ENCODE measurements at regions of chr17 and their contacts with region 1.

Region 1: GRCh38 chr17:46212634-46213435 is 19.6 kb upstream of the KANSL1 start:
- DNase-seq: peak; percentile 79
- ATAC-seq: peak; percentile 51
- H3K4me3 ChIP-seq: no peak overlapping the region
- H3K4me3 Mint-ChIP-seq: no peak overlapping the region
- H3K27ac ChIP-seq: no peak overlapping the region
- H3K27ac Mint-ChIP-seq: no peak overlapping the region
- H3K4me1 ChIP-seq: no peaks in the 10 kb centered on the region
- H3K4me1 Mint-ChIP-seq: peaks cover 5% of the 10 kb centered on the region
- H3K27me3 ChIP-seq: no peaks in the 10 kb centered on the region
- H3K27me3 Mint-ChIP-seq: no peaks in the 10 kb centered on the region
- CTCF ChIP-seq: peak; percentile 91

Region 2: DNA sequence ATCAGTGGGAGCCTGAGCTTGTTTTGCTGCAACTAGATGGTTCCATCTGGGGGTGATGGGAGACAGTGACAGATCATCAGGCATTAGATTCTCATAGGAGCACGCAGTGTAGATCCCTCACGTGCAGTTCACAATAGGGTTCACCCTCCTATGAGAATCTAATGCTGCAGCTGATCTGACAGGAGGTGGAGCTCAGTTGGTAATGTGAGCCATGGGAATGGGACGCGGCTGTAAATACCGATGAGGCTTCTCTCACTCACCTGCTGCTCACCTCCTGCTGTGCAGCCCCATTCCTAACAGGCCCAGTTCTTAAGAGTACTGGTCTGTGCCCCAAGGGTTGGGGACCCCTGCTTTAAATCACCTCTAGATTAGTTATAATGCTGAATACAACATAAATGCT is 584.8 kb before region 1 on chr17:
- CTCF ChIA-PET with region 1: no interaction called
- POLR2A ChIA-PET with region 1: no interaction called
- intact Hi-C with region 1: loop called (anchors 10 kb)
- DNase-seq: no peak
- ATAC-seq: no peak
- H3K4me3 ChIP-seq: no peak overlapping the region
- H3K4me3 Mint-ChIP-seq: no peak overlapping the region
- H3K27ac ChIP-seq: no peak overlapping the region
- H3K27ac Mint-ChIP-seq: no peak overlapping the region
- H3K4me1 ChIP-seq: no peaks in the 10 kb centered on the region
- H3K4me1 Mint-ChIP-seq: no peaks in the 10 kb centered on the region
- H3K27me3 ChIP-seq: no peaks in the 10 kb centered on the region
- H3K27me3 Mint-ChIP-seq: no peaks in the 10 kb centered on the region
- CTCF ChIP-seq: no peak

Region 3: GRCh38 chr17:45784743-45785479 is 427.9 kb before region 1 on chr17:
- CTCF ChIA-PET with region 1: no interaction called
- POLR2A ChIA-PET with region 1: no interaction called
- intact Hi-C with region 1: no loop called
- DNase-seq: peak; percentile 64
- ATAC-seq: peak; percentile 43
- H3K4me3 ChIP-seq: peak overlapping the region in 4 of 5 experiments; percentile 40 to 69 (median 54)
- H3K4me3 Mint-ChIP-seq: peak overlapping the region; percentile 82
- H3K27ac ChIP-seq: no peak overlapping the region
- H3K27ac Mint-ChIP-seq: no peak overlapping the region
- H3K4me1 ChIP-seq: peaks cover 20 to 22% of the 10 kb centered on the region in 2 donors
- H3K4me1 Mint-ChIP-seq: peaks cover 15% of the 10 kb centered on the region
- H3K27me3 ChIP-seq: peaks cover 0 to 70% (median 42%) of the 10 kb centered on the region in 4 experiments
- H3K27me3 Mint-ChIP-seq: peaks cover 71% of the 10 kb centered on the region
- CTCF ChIP-seq: no peak

Region 4: GRCh38 chr17:45867702-45868101 is 345.1 kb before region 1 on chr17:
- CTCF ChIA-PET with region 1: no interaction called
- POLR2A ChIA-PET with region 1: no interaction called
- intact Hi-C with region 1: no loop called
- DNase-seq: no peak
- ATAC-seq: no peak
- H3K4me3 ChIP-seq: no peak overlapping the region
- H3K4me3 Mint-ChIP-seq: no peak overlapping the region
- H3K27ac ChIP-seq: no peak overlapping the region
- H3K27ac Mint-ChIP-seq: no peak overlapping the region
- H3K4me1 ChIP-seq: no peaks in the 10 kb centered on the region
- H3K4me1 Mint-ChIP-seq: no peaks in the 10 kb centered on the region
- H3K27me3 ChIP-seq: peaks cover 0 to 11% (median 7%) of the 10 kb centered on the region in 4 experiments
- H3K27me3 Mint-ChIP-seq: peaks cover 53% of the 10 kb centered on the region
- CTCF ChIP-seq: no peak

Region 5: GRCh38 chr17:46002311-46002972 is 210.4 kb before region 1 on chr17:
- CTCF ChIA-PET with region 1: interaction called, 122 read pairs
- POLR2A ChIA-PET with region 1: no interaction called
- intact Hi-C with region 1: no loop called
- DNase-seq: peak; percentile 84
- ATAC-seq: peak; percentile 97
- H3K4me3 ChIP-seq: no peak overlapping the region
- H3K4me3 Mint-ChIP-seq: no peak overlapping the region
- H3K27ac ChIP-seq: no peak overlapping the region
- H3K27ac Mint-ChIP-seq: no peak overlapping the region
- H3K4me1 ChIP-seq: peaks cover 0 to 5% of the 10 kb centered on the region in 2 donors
- H3K4me1 Mint-ChIP-seq: no peaks in the 10 kb centered on the region
- H3K27me3 ChIP-seq: no peaks in the 10 kb centered on the region
- H3K27me3 Mint-ChIP-seq: no peaks in the 10 kb centered on the region
- CTCF ChIP-seq: peak; percentile 92

Region 6: GRCh38 chr17:46049656-46050055 is 163.2 kb before region 1 on chr17:
- CTCF ChIA-PET with region 1: interaction called, 126 read pairs
- POLR2A ChIA-PET with region 1: no interaction called
- intact Hi-C with region 1: no loop called
- DNase-seq: no peak
- ATAC-seq: no peak
- H3K4me3 ChIP-seq: no peak overlapping the region
- H3K4me3 Mint-ChIP-seq: no peak overlapping the region
- H3K27ac ChIP-seq: no peak overlapping the region
- H3K27ac Mint-ChIP-seq: peak overlapping the region; percentile 1
- H3K4me1 ChIP-seq: no peaks in the 10 kb centered on the region
- H3K4me1 Mint-ChIP-seq: peaks cover 5% of the 10 kb centered on the region
- H3K27me3 ChIP-seq: no peaks in the 10 kb centered on the region
- H3K27me3 Mint-ChIP-seq: no peaks in the 10 kb centered on the region
- CTCF ChIP-seq: no peak

Region 7: DNA sequence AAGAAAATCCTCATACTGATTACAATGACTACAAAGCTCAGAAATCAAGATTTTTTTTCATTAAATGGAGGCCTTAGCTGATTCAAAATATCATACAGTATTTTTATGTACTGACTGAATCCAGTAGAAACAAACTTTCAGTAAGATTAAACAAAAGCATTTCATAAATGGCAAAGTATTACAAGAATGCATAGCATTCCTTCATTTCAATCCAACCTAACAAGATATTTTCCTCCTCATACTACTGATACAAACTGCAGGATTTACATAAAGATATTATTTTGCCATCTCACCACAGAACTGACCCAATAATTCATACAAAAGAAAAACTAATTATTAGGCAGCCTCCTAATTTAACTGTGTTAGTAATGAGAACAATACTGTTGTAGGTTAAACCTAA is 13.5 kb before region 1 on chr17:
- CTCF ChIA-PET with region 1: interaction called, 42 read pairs
- POLR2A ChIA-PET with region 1: no interaction called
- intact Hi-C with region 1: loop called (anchors 1 kb)
- DNase-seq: no peak
- ATAC-seq: no peak
- H3K4me3 ChIP-seq: no peak overlapping the region
- H3K4me3 Mint-ChIP-seq: no peak overlapping the region
- H3K27ac ChIP-seq: no peak overlapping the region
- H3K27ac Mint-ChIP-seq: no peak overlapping the region
- H3K4me1 ChIP-seq: peaks cover 7 to 8% of the 10 kb centered on the region in 2 donors
- H3K4me1 Mint-ChIP-seq: peaks cover 20% of the 10 kb centered on the region
- H3K27me3 ChIP-seq: no peaks in the 10 kb centered on the region
- H3K27me3 Mint-ChIP-seq: no peaks in the 10 kb centered on the region
- CTCF ChIP-seq: no peak

Measured in B cell (primary cell).